ENCODE measurements at regions of chr9 and their contacts with region 1.

Region 1: DNA sequence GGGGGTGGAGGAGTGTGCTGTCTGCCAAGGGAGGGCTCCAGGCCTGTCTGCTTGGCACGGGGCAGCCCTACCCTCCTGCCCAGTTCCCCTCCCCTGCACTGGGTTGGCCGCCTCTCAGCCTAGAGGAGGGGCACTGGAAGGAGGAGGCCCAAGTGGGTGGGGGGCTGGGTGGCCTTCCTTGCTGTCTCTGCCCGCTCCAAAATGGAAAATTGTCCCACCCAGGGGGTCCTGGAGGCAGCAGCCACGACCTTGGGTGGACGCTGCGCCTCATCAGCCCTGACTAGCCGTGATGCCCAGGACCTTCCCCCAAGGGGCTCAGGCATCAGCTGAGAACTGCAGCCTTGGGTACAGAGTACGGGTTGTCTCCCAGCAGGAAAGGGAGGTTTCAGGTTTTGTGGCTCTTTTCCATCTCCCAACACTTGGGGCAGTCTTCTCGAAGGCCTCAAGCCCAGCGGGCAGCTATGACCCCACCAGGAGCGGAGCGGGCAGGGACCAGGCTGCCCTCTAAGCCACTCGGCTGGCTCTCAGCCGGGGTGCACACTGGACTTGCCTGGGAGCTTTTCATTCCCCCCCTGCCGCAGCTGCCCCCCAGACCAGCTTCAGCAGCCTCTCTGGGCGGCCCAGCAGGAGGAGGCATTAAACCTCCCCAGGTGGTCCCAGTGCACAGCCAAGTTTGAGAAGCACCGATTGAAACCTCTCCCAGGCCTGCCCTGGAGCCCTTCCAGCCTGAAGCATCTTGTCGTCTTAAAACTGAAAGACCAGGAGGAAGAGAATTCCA is 20.6 kb downstream of the NTNG2 start:
- DNase-seq: no peak
- ATAC-seq: peak; percentile 62
- H3K4me3 Mint-ChIP-seq: no peak overlapping the region
- H3K27ac Mint-ChIP-seq: no peak overlapping the region
- H3K4me1 Mint-ChIP-seq: peaks cover 49% of the 10 kb centered on the region
- H3K27me3 Mint-ChIP-seq: peaks cover 22% of the 10 kb centered on the region
- CTCF ChIP-seq: no peak

Region 2: GRCh38 chr9:132249123-132249522 is 66.6 kb after region 1 on chr9:
- CTCF ChIA-PET with region 1: interaction called, 20 read pairs
- POLR2A ChIA-PET with region 1: no interaction called
- DNase-seq: no peak
- ATAC-seq: no peak
- H3K4me3 Mint-ChIP-seq: no peak overlapping the region
- H3K27ac Mint-ChIP-seq: no peak overlapping the region
- H3K4me1 Mint-ChIP-seq: peaks cover 13% of the 10 kb centered on the region
- H3K27me3 Mint-ChIP-seq: peaks cover 20% of the 10 kb centered on the region
- CTCF ChIP-seq: no peak

Measured in WTC11 (cell line).